ENCODE measurements at regions of chr18 and their contacts with region 1.

Region 1: DNA sequence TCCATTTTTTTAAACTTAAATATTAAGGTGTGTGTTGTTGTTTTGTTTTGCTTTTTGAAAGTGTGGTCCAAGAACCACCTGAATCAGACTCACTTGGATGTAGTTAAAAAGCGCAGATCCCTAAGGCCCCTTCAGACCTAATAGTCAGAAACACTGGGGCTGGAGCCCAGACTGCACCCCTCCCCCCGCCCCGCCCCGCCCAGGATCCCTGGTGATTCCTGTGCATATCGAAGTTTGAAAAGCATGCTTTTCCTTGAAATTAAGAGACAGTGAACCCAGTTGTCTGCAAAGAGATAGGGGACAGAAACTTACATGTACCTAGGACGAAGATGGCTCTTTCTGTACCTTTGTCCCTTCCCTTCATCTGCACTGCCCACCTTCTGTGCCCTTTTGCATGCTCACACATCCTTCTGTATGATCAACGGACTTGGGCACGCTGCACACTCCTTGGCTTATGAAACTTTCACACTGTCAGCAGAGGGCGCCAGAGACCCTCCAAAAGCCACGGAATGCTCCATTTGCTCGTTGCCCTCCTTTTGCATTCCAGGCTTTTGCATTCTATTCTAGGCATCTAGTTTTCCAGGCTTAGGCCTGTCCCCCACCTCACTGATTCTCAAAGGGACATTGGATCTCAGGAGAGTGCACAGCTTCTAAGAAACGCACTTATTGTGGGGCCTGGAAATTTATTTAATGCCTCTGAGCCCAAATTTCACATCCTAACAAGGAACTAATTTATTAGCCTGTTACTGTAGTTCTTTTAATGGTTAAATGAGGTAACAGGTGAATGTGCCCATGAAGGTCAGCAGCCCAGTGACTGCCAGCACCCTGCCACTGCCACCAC is 32.8 kb upstream of the SLC14A1 start:
- DNase-seq: peak; percentile 77
- ATAC-seq: no peak
- H3K4me3 ChIP-seq: no peak overlapping the region
- H3K4me3 Mint-ChIP-seq: no peak overlapping the region
- H3K27ac ChIP-seq: no peak overlapping the region
- H3K27ac Mint-ChIP-seq: peak overlapping the region; percentile 43
- H3K4me1 ChIP-seq: peaks cover 32 to 44% of the 10 kb centered on the region in 2 donors
- H3K4me1 Mint-ChIP-seq: peaks cover 40% of the 10 kb centered on the region
- H3K27me3 ChIP-seq: no peaks in the 10 kb centered on the region
- H3K27me3 Mint-ChIP-seq: peaks cover 7% of the 10 kb centered on the region
- CTCF ChIP-seq: peak; percentile 86

Region 2: GRCh38 chr18:45571714-45572113 is 119.5 kb before region 1 on chr18:
- CTCF ChIA-PET with region 1: no interaction called
- POLR2A ChIA-PET with region 1: no interaction called
- intact Hi-C with region 1: no loop called
- DNase-seq: no peak
- ATAC-seq: no peak
- H3K4me3 ChIP-seq: no peak overlapping the region
- H3K4me3 Mint-ChIP-seq: no peak overlapping the region
- H3K27ac ChIP-seq: no peak overlapping the region
- H3K27ac Mint-ChIP-seq: no peak overlapping the region
- H3K4me1 ChIP-seq: no peaks in the 10 kb centered on the region
- H3K4me1 Mint-ChIP-seq: no peaks in the 10 kb centered on the region
- H3K27me3 ChIP-seq: no peaks in the 10 kb centered on the region
- H3K27me3 Mint-ChIP-seq: peaks cover 21% of the 10 kb centered on the region
- CTCF ChIP-seq: no peak

Region 3: DNA sequence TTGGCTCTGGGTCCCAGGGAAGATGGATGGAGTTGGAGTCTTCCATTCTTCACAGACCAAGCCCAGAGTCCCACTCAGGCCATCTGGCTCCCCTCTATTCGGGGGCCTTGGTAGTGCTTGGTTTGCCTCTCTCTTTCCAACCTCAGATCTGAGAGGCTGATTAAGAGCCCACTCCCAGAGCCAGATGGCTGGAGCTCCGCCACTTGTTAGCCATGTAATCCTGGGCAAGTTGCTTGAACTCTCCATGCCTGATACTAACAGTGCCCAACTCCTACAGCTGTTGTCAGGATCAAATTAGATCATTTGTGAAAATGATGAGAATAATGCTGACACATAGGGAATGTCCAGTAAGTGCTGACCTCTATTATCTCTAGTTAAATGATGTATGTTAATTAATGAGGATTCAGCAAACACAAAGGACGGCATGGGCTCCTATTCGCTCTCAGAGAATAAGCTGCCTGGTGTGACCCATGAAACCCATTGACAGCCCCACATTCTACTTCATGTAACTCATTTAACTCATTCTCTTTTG is 13.9 kb before region 1 on chr18:
- CTCF ChIA-PET with region 1: interaction called, 17 read pairs
- POLR2A ChIA-PET with region 1: no interaction called
- intact Hi-C with region 1: no loop called
- DNase-seq: no peak
- ATAC-seq: no peak
- H3K4me3 ChIP-seq: no peak overlapping the region
- H3K4me3 Mint-ChIP-seq: no peak overlapping the region
- H3K27ac ChIP-seq: no peak overlapping the region
- H3K27ac Mint-ChIP-seq: no peak overlapping the region
- H3K4me1 ChIP-seq: no peaks in the 10 kb centered on the region
- H3K4me1 Mint-ChIP-seq: no peaks in the 10 kb centered on the region
- H3K27me3 ChIP-seq: no peaks in the 10 kb centered on the region
- H3K27me3 Mint-ChIP-seq: no peaks in the 10 kb centered on the region
- CTCF ChIP-seq: no peak

Region 4: GRCh38 chr18:45874491-45875184 is 183.4 kb after region 1 on chr18:
- CTCF ChIA-PET with region 1: interaction called, 139 read pairs
- POLR2A ChIA-PET with region 1: no interaction called
- intact Hi-C with region 1: loop called (anchors 1 kb)
- DNase-seq: peak; percentile 73
- ATAC-seq: peak; percentile 91
- H3K4me3 ChIP-seq: peak overlapping the region in 1 of 5 experiments; percentile 25
- H3K4me3 Mint-ChIP-seq: peak overlapping the region; percentile 27
- H3K27ac ChIP-seq: peak overlapping the region; percentile 63 to 71
- H3K27ac Mint-ChIP-seq: peak overlapping the region; percentile 85
- H3K4me1 ChIP-seq: peaks cover 9 to 14% of the 10 kb centered on the region in 2 donors
- H3K4me1 Mint-ChIP-seq: peaks cover 18% of the 10 kb centered on the region
- H3K27me3 ChIP-seq: no peaks in the 10 kb centered on the region
- H3K27me3 Mint-ChIP-seq: no peaks in the 10 kb centered on the region
- CTCF ChIP-seq: no peak

Region 5: DNA sequence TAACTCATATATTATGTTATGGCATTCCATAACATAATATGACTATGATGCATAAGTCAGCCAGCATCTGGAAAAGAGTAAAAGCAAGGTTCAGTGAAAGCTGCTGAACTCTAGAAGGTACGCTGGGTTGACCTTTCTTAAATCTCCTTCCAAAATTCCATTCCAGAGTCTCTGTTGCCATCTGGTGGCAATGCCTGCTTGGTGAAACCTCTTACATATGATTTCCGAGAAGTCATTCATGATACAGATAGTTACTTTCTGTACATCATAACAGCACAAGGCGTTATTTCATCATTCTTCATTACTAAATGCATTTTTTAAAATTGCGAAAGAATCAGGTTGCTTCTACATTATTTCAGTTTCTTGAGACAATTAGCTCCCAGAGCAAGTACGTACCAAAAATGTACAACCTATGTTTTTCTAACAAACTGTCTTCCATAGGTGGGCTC is 282.9 kb after region 1 on chr18:
- CTCF ChIA-PET with region 1: interaction called, 3 read pairs
- POLR2A ChIA-PET with region 1: interaction called, 5 read pairs
- intact Hi-C with region 1: loop called (anchors 1 kb)
- DNase-seq: peak; percentile 67
- ATAC-seq: no peak
- H3K4me3 ChIP-seq: no peak overlapping the region
- H3K4me3 Mint-ChIP-seq: no peak overlapping the region
- H3K27ac ChIP-seq: no peak overlapping the region
- H3K27ac Mint-ChIP-seq: no peak overlapping the region
- H3K4me1 ChIP-seq: no peaks in the 10 kb centered on the region
- H3K4me1 Mint-ChIP-seq: peaks cover 3% of the 10 kb centered on the region
- H3K27me3 ChIP-seq: no peaks in the 10 kb centered on the region
- H3K27me3 Mint-ChIP-seq: no peaks in the 10 kb centered on the region
- CTCF ChIP-seq: peak; percentile 67

Region 6: DNA sequence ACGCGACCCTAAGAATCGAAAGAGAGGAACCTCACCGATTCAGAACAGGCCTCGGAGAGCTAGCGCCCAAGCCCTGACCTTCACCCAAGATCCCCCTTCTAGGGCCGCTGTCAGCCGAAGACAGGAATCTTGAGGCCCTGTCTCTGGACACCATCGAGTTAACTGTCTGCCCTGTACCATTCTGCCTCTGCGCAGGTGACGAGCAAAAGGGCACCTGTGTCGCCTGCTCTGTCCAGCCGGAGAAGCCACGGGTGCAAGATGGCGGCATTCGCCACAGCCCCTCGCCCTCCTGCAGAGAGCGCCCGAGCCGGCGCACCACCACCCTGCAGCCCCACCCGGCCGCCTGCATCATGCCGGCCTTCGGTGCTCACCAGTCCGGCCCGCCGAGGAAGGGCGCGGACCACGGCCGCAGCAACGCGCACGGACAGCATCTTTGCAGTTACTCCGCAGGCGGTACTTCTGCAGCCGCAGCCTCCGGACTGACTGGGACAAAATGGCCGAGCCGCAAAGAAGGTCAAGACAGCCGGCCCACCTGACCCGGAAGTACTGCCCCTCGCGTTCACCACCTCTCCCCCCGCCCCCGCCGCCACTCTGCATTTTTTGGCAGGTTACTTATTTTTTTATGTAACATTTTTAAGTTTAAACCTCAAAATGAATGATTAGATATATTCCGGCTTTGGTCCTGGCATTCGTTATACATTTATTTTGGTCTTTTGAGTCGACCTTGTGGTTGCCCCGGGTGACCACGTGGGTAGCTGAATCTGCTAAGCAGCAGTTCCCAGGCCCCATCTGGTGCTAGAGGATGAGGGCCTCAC is 406.8 kb after region 1 on chr18 and contains the start of gene ATP5F1A:
- CTCF ChIA-PET with region 1: interaction called, 3 read pairs
- POLR2A ChIA-PET with region 1: no interaction called
- intact Hi-C with region 1: loop called (anchors 1 kb)
- DNase-seq: peak; percentile 94
- ATAC-seq: peak; percentile 88
- H3K4me3 ChIP-seq: peak within 1 kb of the TSS; percentile 66 to 80 (median 75)
- H3K4me3 Mint-ChIP-seq: peak within 1 kb of the TSS; percentile 99
- H3K27ac ChIP-seq: peak within 1 kb of the TSS; percentile 76 to 90
- H3K27ac Mint-ChIP-seq: peak within 1 kb of the TSS; percentile 97
- H3K4me1 ChIP-seq: peaks cover 25 to 26% of the 10 kb centered on the region in 2 donors
- H3K4me1 Mint-ChIP-seq: peaks cover 27% of the 10 kb centered on the region
- H3K27me3 ChIP-seq: no peaks in the 10 kb centered on the region
- H3K27me3 Mint-ChIP-seq: no peaks in the 10 kb centered on the region
- CTCF ChIP-seq: no peak
- total RNA-seq, gene ATP5F1A: 235 and 247 TPM in 2 replicates